BJ (cell line): ENCODE measurements at regions of chr16 and their contacts with region 1.

Region 1: GRCh38 chr16:15643048-15643945 is at the start of gene MARF1:
- DNase-seq: peak; percentile 46
- H3K4me3 ChIP-seq: peak within 1 kb of the TSS; percentile 99
- H3K27me3 ChIP-seq: no peaks in the 10 kb centered on the region
- CTCF ChIP-seq: peak; percentile 59
- polyA plus RNA-seq, gene MARF1: 22.5 and 25.2 TPM in 2 replicates

Region 2: GRCh38 chr16:14378131-14378551 is 1265.2 kb before region 1 on chr16:
- CTCF ChIA-PET with region 1: no interaction called
- POLR2A ChIA-PET with region 1: interaction called, 14 read pairs
- DNase-seq: peak; percentile 93
- H3K4me3 ChIP-seq: no peak overlapping the region
- H3K27me3 ChIP-seq: no peaks in the 10 kb centered on the region
- CTCF ChIP-seq: no peak

Region 3: GRCh38 chr16:15660203-15660601 is 16.9 kb after region 1 on chr16:
- CTCF ChIA-PET with region 1: interaction called, 10 read pairs
- POLR2A ChIA-PET with region 1: no interaction called
- DNase-seq: no peak
- H3K4me3 ChIP-seq: no peak overlapping the region
- H3K27me3 ChIP-seq: no peaks in the 10 kb centered on the region
- CTCF ChIP-seq: no peak